HCT116 (cell line): ENCODE measurements at regions of chr19 and their contacts with region 1.

Region 1: DNA sequence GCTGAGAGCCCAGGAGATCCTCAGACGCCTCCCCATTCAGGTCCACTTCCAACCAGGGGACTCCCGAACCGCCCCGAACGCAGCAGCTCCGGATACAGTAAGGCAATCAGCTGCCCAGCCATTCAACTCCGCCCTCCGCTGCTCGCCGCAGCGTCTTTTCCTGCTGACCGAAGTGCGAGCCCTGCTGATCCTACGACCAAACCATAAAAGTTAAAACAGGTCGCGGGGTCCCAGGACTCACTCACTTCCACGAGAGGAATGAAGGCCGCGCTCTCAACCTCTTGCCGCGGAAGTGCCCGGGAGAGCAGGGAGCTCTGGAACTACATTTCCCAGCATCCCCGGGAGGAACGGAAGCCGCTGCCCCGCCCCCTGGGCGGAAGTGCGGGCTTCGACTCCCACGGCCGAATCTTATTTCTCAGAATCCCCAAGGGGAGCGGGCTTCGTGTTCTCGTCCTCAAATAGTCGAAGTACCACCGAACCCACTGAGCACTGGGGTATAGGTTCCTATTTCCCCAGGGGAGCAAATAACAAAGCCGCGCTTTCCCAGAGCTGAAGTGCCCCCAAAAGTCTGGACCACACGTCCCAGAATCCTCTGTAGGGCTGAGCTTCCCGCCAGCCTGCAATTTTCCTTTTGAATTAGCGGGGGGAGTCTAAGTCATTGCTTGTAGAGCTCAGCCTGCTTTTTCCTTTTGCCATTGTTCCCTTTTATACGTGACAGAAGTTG is at the start of gene ZNF45:
- DNase-seq: peak; percentile 78
- ATAC-seq: peak; percentile 95
- H3K4me3 ChIP-seq: peak within 1 kb of the TSS; percentile 58 to 71
- H3K27ac ChIP-seq: peak within 1 kb of the TSS; percentile 58
- H3K4me1 ChIP-seq: peaks cover 5 to 14% of the 10 kb centered on the region in 2 experiments
- H3K27me3 ChIP-seq: no peaks in the 10 kb centered on the region
- CTCF ChIP-seq: no peak
- POLR2A ChIP-seq: no peak
- RAD21 ChIP-seq: no peak
- total RNA-seq, gene ZNF45: 15.2 TPM

Region 2: GRCh38 chr19:43438291-43439096 is 496.7 kb before region 1 on chr19:
- CTCF ChIA-PET with region 1: no interaction called
- POLR2A ChIA-PET with region 1: no interaction called
- RAD21 ChIA-PET with region 1: no interaction called
- intact Hi-C with region 1: loop called (anchors 10 kb)
- DNase-seq: no peak
- ATAC-seq: no peak
- H3K4me3 ChIP-seq: no peak overlapping the region
- H3K27ac ChIP-seq: no peak overlapping the region
- H3K4me1 ChIP-seq: peaks cover 0 to 16% of the 10 kb centered on the region in 2 experiments; a peak in 2 of 4 replicates
- H3K27me3 ChIP-seq: no peaks in the 10 kb centered on the region
- CTCF ChIP-seq: no peak
- POLR2A ChIP-seq: no peak
- RAD21 ChIP-seq: no peak

Region 3: GRCh38 chr19:43765109-43765876 is 169.9 kb before region 1 on chr19:
- CTCF ChIA-PET with region 1: no interaction called
- POLR2A ChIA-PET with region 1: no interaction called
- RAD21 ChIA-PET with region 1: no interaction called
- intact Hi-C with region 1: no loop called
- DNase-seq: peak; percentile 93
- ATAC-seq: peak; percentile 80
- H3K4me3 ChIP-seq: peak overlapping the region in 1 of 2 experiments; percentile 12; a peak in 2 of 4 replicates
- H3K27ac ChIP-seq: peak overlapping the region; percentile 98
- H3K4me1 ChIP-seq: peaks cover 67 to 84% of the 10 kb centered on the region in 2 experiments
- H3K27me3 ChIP-seq: no peaks in the 10 kb centered on the region
- CTCF ChIP-seq: no peak
- POLR2A ChIP-seq: no peak
- RAD21 ChIP-seq: peak; percentile 42

Region 4: GRCh38 chr19:44113138-44113783 is 178.1 kb after region 1 on chr19 and contains the start of gene ZNF225:
- CTCF ChIA-PET with region 1: no interaction called
- POLR2A ChIA-PET with region 1: no interaction called
- RAD21 ChIA-PET with region 1: no interaction called
- intact Hi-C with region 1: no loop called
- DNase-seq: peak; percentile 97
- ATAC-seq: peak; percentile 98
- H3K4me3 ChIP-seq: peak within 1 kb of the TSS; percentile 72 to 87
- H3K27ac ChIP-seq: peak within 1 kb of the TSS; percentile 34
- H3K4me1 ChIP-seq: peaks cover 2 to 10% of the 10 kb centered on the region in 2 experiments; a peak in 1 of 4 replicates
- H3K27me3 ChIP-seq: no peaks in the 10 kb centered on the region
- CTCF ChIP-seq: no peak
- POLR2A ChIP-seq: peak; percentile 63
- RAD21 ChIP-seq: peak; percentile 19; the same call in 1 of the 2 replicates
- total RNA-seq, gene ZNF225: 2.8 TPM